Posterior vena cava (tissue), 2 donors: ENCODE measurements at regions of chr6 and their contacts with region 1.

Region 1: GRCh38 chr6:3751730-3752542 is 423 bp upstream of the PXDC1 start:
- DNase-seq: peak; percentile 97

Region 2: GRCh38 chr6:3800850-3801591 is 49.1 kb after region 1 on chr6:
- intact Hi-C with region 1: loop called in 1 of 2 experiments (anchors 5 kb)
- DNase-seq: no peak

Region 3: GRCh38 chr6:3825851-3826581 is 74.1 kb after region 1 on chr6:
- intact Hi-C with region 1: loop called (anchors 1 to 5 kb)
- DNase-seq: peak; percentile 97

Region 4: GRCh38 chr6:3841711-3842565 is 90.0 kb after region 1 on chr6:
- intact Hi-C with region 1: loop called in 1 of 2 experiments (anchors 5 kb)
- DNase-seq: peak; percentile 83

Region 5: GRCh38 chr6:3990692-3991501 is 239.0 kb after region 1 on chr6:
- intact Hi-C with region 1: loop called in 1 of 2 experiments (anchors 5 kb)
- DNase-seq: peak; percentile 94